ENCODE measurements at regions of chr18 and their contacts with region 1.

Region 1: DNA sequence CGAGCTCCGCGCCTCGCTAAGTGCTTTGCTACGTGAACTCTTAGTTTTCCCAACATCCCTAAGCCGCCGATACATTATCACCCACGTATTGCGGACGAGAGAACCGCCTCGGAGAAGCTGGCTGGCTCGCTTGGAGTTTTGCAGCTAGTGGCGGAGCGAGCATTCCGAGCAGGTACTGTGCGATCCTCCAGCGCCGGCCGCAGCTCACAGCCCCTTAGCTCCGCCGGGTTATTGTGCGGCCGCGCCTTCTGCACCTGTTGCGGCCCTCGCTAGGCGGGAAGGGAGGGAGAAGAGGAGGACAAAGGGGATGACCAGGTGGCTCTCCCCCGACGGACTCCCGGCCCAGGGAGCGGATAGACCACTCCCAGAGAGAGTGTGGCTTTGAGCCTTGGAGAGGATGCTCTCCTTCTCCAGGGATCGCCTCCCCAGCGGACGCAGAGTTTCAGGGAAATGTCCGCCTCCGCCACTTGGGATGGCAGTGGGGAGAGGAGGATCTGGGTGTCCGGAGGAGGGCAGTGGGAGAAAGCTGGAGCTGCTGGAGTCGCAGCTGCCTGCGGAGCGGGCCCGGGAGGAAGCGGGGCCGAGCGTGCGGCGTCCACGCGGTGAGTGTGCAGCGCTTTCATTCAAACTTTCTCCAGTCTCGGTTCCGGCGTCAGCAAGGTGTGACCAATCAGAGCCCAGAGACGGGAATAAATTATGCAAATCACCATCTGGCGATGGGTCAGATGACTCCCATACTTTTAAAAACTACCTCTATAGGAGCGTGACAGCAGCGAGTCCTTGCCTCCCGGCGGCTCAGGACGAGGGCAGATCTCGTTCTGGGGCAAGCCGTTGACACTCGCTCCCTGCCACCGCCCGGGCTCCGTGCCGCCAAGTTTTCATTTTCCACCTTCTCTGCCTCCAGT is at the start of gene LIPG:
- DNase-seq: peak; percentile 93
- H3K4me3 Mint-ChIP-seq: peak within 1 kb of the TSS; percentile 66
- H3K27ac Mint-ChIP-seq: peak within 1 kb of the TSS; percentile 1
- H3K4me1 Mint-ChIP-seq: peaks cover 49% of the 10 kb centered on the region
- H3K27me3 Mint-ChIP-seq: no peaks in the 10 kb centered on the region
- CTCF ChIP-seq: no peak
- total RNA-seq, gene LIPG: 57.8 and 67.6 TPM in 2 replicates

Region 2: DNA sequence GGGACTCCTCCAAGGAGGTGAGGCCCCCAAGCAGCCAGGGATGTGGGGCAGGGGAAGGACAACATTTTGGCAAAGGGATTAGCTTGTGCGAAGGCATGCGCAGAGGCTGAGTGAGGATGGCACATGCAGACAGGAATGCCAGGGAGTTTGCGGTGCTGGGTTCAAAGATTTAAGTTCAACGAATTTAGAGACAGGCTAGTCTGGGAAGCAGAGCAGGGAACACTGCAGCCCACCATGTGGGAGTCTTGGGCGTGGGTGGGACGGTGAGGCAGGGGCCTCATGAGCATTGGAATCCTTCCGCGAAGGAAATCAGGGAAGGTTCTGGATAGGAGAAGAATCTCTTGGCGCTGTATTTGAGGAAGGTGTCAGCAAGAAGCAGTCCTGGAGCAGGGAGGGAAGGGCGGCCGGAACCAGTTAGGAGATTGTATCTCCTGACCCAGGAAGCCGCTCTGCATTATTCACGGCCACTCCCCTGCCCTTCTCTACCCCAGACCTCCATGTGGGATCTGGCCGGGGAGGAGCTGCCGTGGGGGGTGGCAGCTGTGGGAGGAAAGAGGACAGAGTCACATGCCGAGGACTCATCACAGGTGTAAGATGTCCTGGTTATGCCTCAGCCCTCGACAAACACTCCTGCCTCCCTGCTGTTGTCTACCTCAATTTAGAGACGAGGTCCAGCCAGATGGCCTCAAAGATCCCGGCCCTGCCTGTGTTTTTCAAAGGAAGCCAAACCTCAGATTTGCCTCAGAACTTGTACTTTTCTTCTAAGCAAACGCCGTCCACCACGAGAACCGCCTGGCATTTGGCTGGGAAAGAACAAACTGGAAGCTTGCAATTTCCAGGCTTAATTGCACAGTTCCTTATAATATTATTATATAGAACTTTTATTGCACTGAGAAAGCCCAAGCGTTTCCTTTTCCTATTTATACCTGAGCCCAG is 1507.4 kb before region 1 on chr18:
- CTCF ChIA-PET with region 1: no interaction called
- POLR2A ChIA-PET with region 1: no interaction called
- intact Hi-C with region 1: no loop called
- DNase-seq: no peak
- H3K4me3 Mint-ChIP-seq: no peak overlapping the region
- H3K27ac Mint-ChIP-seq: no peak overlapping the region
- H3K4me1 Mint-ChIP-seq: peaks cover 7% of the 10 kb centered on the region
- H3K27me3 Mint-ChIP-seq: peaks cover 25% of the 10 kb centered on the region
- CTCF ChIP-seq: no peak

Region 3: GRCh38 chr18:49510393-49511115 is 51.0 kb before region 1 on chr18:
- CTCF ChIA-PET with region 1: interaction called, 8 read pairs
- POLR2A ChIA-PET with region 1: no interaction called
- intact Hi-C with region 1: loop called (anchors 1 kb)
- DNase-seq: peak; percentile 66
- H3K4me3 Mint-ChIP-seq: no peak overlapping the region
- H3K27ac Mint-ChIP-seq: no peak overlapping the region
- H3K4me1 Mint-ChIP-seq: no peaks in the 10 kb centered on the region
- H3K27me3 Mint-ChIP-seq: peaks cover 25% of the 10 kb centered on the region
- CTCF ChIP-seq: peak; percentile 80

Region 4: GRCh38 chr18:49690307-49690706 is 128.8 kb after region 1 on chr18:
- CTCF ChIA-PET with region 1: no interaction called
- POLR2A ChIA-PET with region 1: interaction called, 11 read pairs
- intact Hi-C with region 1: loop called (anchors 2 kb)
- DNase-seq: peak; percentile 83
- H3K4me3 Mint-ChIP-seq: no peak overlapping the region
- H3K27ac Mint-ChIP-seq: peak overlapping the region; percentile 8
- H3K4me1 Mint-ChIP-seq: peaks cover 28% of the 10 kb centered on the region
- H3K27me3 Mint-ChIP-seq: no peaks in the 10 kb centered on the region
- CTCF ChIP-seq: no peak

Region 5: GRCh38 chr18:49757513-49758262 is 196.1 kb after region 1 on chr18:
- CTCF ChIA-PET with region 1: interaction called, 11 read pairs
- POLR2A ChIA-PET with region 1: no interaction called
- intact Hi-C with region 1: no loop called
- DNase-seq: peak; percentile 42
- H3K4me3 Mint-ChIP-seq: no peak overlapping the region
- H3K27ac Mint-ChIP-seq: no peak overlapping the region
- H3K4me1 Mint-ChIP-seq: no peaks in the 10 kb centered on the region
- H3K27me3 Mint-ChIP-seq: no peaks in the 10 kb centered on the region
- CTCF ChIP-seq: no peak

Region 6: DNA sequence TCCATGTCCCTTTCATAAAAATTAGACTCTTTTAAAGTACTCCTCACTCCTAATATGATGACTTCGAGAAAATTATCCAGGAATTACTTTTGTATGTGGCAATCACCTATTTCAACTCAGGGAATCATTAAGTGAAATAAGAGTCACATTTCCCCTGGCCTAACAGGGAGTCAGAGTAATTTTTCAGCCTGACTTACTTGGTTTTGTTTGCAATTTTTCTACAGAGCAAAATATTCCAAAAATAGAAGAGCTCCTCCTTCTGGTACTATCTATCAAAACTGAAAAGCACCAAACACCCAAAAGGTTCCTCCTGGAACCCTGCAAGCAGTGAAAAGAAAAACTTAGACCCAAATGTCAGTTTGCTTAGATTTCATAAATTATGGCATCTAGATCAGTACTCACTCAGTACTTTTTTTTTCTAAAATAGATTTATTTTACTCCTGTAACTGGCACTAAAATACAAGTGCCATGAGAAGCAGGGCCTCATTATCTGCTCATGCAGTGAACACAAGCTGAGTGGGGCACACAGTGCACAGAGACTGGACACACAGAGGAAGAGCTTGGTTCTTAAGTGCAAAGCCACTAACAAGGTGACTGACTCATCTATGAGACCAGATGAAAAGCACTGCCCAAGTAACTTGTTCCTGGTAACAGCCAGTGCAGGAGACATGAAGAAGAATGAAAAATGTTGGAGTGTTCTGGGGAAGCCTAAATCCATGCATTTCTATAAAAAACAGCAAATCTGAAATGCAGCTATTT is 223.1 kb after region 1 on chr18:
- CTCF ChIA-PET with region 1: interaction called, 18 read pairs
- POLR2A ChIA-PET with region 1: interaction called, 3 read pairs
- intact Hi-C with region 1: loop called (anchors 1 kb)
- DNase-seq: no peak
- H3K4me3 Mint-ChIP-seq: no peak overlapping the region
- H3K27ac Mint-ChIP-seq: no peak overlapping the region
- H3K4me1 Mint-ChIP-seq: peaks cover 14% of the 10 kb centered on the region
- H3K27me3 Mint-ChIP-seq: no peaks in the 10 kb centered on the region
- CTCF ChIP-seq: peak; percentile 31

Region 7: DNA sequence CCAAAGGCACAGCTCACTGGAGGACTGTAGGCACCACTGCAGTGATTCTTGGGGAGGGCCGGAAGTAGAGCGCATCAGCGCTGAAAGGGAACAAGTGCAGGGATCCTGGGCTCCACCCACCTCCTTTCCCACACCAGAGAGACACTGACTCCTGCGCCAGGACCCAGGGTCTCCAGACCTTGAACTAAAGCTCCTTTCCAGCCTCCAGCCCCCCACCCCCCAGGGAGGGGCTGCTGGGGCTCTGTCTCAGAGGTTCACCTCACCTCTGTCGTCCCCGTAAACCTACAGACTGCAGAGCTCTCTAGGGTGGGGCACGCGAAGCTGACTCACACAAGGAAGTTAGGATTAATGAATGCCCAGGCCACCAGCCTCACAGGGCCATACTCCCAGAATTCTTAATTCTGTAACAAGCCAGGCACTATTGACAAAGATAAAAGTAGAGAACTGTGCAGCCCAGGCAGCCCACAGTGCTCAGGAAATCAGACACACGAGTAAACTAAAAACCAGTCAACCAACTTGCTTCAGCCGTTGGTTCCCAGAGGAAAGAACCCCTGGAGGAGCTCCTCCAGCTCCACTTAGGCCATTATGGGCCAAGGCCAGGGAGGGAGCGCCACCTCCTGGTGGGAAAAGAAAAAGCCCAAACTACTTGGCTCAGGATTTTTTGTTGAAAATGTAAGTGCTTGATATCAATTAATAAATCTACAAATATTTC is 296.9 kb after region 1 on chr18:
- CTCF ChIA-PET with region 1: interaction called, 52 read pairs
- POLR2A ChIA-PET with region 1: interaction called, 3 read pairs
- intact Hi-C with region 1: loop called (anchors 1 kb)
- DNase-seq: peak; percentile 72
- H3K4me3 Mint-ChIP-seq: no peak overlapping the region
- H3K27ac Mint-ChIP-seq: no peak overlapping the region
- H3K4me1 Mint-ChIP-seq: peaks cover 6% of the 10 kb centered on the region
- H3K27me3 Mint-ChIP-seq: no peaks in the 10 kb centered on the region
- CTCF ChIP-seq: peak; percentile 92

Measured in MCF 10A (cell line).